GM18951 (cell line): ENCODE measurements at regions of chr2 and their contacts with region 1.

Region 1: DNA sequence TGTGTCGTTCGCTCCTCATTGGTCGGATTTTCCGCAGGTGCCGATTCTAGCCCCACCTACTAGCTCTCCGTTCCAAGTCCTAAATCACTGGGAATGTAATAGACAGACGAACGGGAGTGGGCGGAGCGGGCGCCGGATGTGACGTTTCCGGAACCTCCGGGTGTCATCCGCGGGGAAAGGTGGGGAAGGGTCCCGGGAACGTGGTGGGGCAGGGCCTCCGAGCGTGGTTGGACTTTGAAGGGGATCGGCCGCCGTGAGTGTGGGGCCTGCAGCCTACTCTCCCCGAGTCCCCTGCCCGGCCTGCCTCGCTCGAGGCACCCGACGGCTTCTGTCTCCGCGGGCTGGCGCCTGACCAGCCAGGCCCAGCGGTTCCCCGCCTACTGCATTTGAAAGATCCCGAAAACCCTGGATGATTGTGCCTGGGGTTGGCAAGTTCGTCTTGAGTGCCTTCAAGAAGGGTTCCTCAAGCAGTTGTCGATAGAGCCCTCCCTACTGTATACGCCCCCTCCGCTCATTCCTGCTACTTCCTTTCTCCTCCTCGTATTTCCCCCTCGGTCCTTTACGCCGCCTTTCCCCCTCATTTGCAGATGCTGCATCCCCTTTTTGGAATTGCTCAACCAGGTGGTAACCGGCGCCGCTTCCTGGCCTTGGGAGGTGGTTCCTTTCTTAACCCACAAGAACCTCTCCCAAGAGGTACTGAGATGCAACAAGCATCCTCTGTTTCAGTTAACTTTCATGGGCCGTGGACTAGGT is at the start of gene STAMBP:
- POLR2A ChIP-seq: peak; percentile 80

Region 2: DNA sequence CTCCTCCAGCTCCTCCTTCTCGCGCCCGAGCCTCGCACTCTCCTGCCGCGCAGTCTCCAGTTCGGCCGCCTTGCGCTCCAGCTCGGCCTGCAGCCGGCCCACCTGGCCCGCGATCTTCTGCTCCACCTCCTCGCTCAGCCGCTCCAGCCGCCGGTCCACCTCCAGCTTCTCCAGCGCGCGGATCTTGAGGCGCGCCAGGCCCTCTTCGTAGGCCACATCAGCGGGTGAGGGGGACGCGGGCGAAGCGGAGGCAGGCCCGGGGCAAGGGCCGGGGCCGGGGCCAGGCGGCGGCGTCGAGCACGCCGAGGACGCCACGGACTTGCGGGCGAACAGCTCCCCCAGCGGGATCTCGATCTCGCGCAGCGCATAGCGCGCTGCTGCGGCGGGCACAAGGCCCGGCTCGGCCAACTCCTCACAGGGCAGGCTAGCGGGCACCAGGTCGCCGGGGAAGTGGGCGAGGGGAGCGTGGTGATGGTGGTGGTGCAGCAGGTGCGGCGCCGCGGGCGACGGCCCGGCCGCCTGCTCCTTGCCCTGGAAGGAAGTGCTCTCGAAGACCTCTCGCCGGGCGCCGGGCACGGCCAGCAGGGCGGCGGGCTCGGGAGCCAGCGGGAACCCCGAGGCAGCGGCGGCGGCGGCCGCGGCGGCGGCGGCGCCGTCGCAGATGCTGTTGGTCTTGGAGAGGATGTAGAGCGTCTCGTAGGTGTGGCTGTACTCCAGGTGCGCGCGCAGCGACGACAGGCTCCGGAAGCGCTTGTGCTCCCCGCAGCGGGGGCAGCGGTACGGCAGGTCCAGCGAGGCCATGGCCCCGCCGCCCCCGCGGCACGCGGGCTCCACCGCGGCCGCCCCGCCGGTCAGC is 559.9 kb before region 1 on chr2:
- in situ Hi-C with region 1: no loop called
- POLR2A ChIP-seq: peak; percentile 33

Region 3: DNA sequence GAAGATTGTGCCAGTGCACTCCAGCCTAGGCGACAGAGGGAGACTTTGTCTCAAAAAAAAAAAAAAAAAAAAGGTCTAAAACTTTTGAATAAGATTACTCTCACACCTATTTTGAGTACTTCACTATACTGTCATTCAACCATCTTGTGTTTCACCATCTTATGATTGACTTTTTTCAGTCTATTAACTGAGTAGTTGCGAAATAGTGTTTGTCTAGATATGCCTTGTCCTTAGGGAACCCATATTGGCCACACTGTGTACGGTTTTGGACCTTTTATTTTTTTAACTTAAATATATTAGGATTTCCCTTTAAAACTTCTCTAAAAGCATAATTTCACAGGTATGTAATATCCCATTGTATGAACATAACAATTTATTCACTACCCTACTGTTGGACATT is 371.0 kb before region 1 on chr2:
- in situ Hi-C with region 1: no loop called
- POLR2A ChIP-seq: no peak

Region 4: GRCh38 chr2:74149570-74150319 is 320.8 kb after region 1 on chr2:
- in situ Hi-C with region 1: loop called (anchors 5 kb)
- POLR2A ChIP-seq: no peak

Region 5: GRCh38 chr2:74553892-74554645 is 725.1 kb after region 1 on chr2 and contains the start of gene LOXL3:
- in situ Hi-C with region 1: no loop called
- POLR2A ChIP-seq: no peak